Ascending aorta (tissue), 2 donors: ENCODE measurements at regions of chr11 and their contacts with region 1.

Region 1: GRCh38 chr11:114762408-114762807 is 84.1 kb downstream of the NXPE2 start:
- DNase-seq: peak in 1 of 2 donors; percentile 67
- H3K4me3 ChIP-seq: no peak overlapping the region
- H3K27ac ChIP-seq: no peak overlapping the region
- H3K4me1 ChIP-seq: no peaks in the 10 kb centered on the region
- H3K27me3 ChIP-seq: no peaks in the 10 kb centered on the region
- CTCF ChIP-seq: peak; percentile 41 to 65 (median 52)

Region 2: DNA sequence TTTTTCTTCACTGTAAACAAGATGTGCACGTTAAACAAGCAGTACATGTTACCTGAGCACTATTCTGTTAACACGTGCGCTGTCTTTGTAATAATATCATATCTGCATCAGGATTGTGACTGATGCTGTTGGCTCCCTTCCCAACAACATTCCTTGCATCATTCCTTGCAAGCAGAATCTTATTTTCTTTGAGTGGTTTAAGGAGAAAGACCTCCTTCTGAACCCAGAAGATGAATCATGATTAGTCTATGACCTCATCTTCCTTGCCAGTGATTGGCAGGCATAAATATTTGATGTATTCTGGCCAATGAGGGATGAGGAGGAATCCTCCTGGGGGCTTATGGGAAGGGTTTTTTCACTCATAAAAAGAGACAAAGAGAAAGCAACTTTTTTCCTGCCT is 408.3 kb before region 1 on chr11:
- intact Hi-C with region 1: loop called (anchors 5 kb)
- DNase-seq: no peak
- H3K4me3 ChIP-seq: no peak overlapping the region
- H3K27ac ChIP-seq: no peak overlapping the region
- H3K4me1 ChIP-seq: no peaks in the 10 kb centered on the region
- H3K27me3 ChIP-seq: no peaks in the 10 kb centered on the region
- CTCF ChIP-seq: no peak